CD14-positive monocyte (primary cell): ENCODE measurements at regions of chr6 and their contacts with region 1.

Region 1: GRCh38 chr6:35297601-35298481 is at the start of gene DEF6:
- DNase-seq: peak; percentile 80 to 90 (median 83)
- H3K4me3 ChIP-seq: peak within 1 kb of the TSS; percentile 68 to 94 (median 88)
- H3K4me3 Mint-ChIP-seq: peak within 1 kb of the TSS; percentile 79 to 90
- H3K27ac ChIP-seq: peak within 1 kb of the TSS; percentile 80 to 94
- H3K27ac Mint-ChIP-seq: peak within 1 kb of the TSS; percentile 91 to 97 (median 95)
- H3K4me1 ChIP-seq: peaks cover 63 to 66% of the 10 kb centered on the region in 2 donors
- H3K4me1 Mint-ChIP-seq: peaks cover 60% of the 10 kb centered on the region
- H3K27me3 ChIP-seq: no peaks in the 10 kb centered on the region
- H3K27me3 Mint-ChIP-seq: peaks cover 0 to 4% (median 0%) of the 10 kb centered on the region in 3 donors
- CTCF ChIP-seq: peak; percentile 80
- polyA plus RNA-seq, gene DEF6: 41.2 to 110 (median 59.3) TPM

Region 2: GRCh38 chr6:35327349-35328027 is 29.6 kb after region 1 on chr6:
- intact Hi-C with region 1: loop called (anchors 5 kb)
- DNase-seq: peak; percentile 44 to 74 (median 62)
- H3K4me3 ChIP-seq: no peak overlapping the region
- H3K4me3 Mint-ChIP-seq: no peak overlapping the region
- H3K27ac ChIP-seq: no peak overlapping the region
- H3K27ac Mint-ChIP-seq: peak overlapping the region in 3 of 7 donors; percentile 55 to 79 (median 63)
- H3K4me1 ChIP-seq: no peaks in the 10 kb centered on the region
- H3K4me1 Mint-ChIP-seq: peaks cover 10% of the 10 kb centered on the region
- H3K27me3 ChIP-seq: no peaks in the 10 kb centered on the region
- H3K27me3 Mint-ChIP-seq: peaks cover 0 to 1% (median 0%) of the 10 kb centered on the region in 3 donors
- CTCF ChIP-seq: peak; percentile 71

Region 3: GRCh38 chr6:35370124-35370741 is 72.4 kb after region 1 on chr6:
- intact Hi-C with region 1: loop called in 1 of 2 experiments (anchors 2 kb)
- DNase-seq: peak; percentile 96 to 100 (median 99)
- H3K4me3 ChIP-seq: peak overlapping the region in 1 of 3 experiments; percentile 60
- H3K4me3 Mint-ChIP-seq: peak overlapping the region; percentile 58 to 88
- H3K27ac ChIP-seq: peak overlapping the region; percentile 91 to 98
- H3K27ac Mint-ChIP-seq: peak overlapping the region; percentile 97 to 99 (median 99)
- H3K4me1 ChIP-seq: peaks cover 48 to 52% of the 10 kb centered on the region in 2 donors
- H3K4me1 Mint-ChIP-seq: peaks cover 56% of the 10 kb centered on the region
- H3K27me3 ChIP-seq: peaks cover 0 to 7% of the 10 kb centered on the region in 2 donors
- H3K27me3 Mint-ChIP-seq: peaks cover 8 to 15% (median 14%) of the 10 kb centered on the region in 3 donors
- CTCF ChIP-seq: no peak

Region 4: DNA sequence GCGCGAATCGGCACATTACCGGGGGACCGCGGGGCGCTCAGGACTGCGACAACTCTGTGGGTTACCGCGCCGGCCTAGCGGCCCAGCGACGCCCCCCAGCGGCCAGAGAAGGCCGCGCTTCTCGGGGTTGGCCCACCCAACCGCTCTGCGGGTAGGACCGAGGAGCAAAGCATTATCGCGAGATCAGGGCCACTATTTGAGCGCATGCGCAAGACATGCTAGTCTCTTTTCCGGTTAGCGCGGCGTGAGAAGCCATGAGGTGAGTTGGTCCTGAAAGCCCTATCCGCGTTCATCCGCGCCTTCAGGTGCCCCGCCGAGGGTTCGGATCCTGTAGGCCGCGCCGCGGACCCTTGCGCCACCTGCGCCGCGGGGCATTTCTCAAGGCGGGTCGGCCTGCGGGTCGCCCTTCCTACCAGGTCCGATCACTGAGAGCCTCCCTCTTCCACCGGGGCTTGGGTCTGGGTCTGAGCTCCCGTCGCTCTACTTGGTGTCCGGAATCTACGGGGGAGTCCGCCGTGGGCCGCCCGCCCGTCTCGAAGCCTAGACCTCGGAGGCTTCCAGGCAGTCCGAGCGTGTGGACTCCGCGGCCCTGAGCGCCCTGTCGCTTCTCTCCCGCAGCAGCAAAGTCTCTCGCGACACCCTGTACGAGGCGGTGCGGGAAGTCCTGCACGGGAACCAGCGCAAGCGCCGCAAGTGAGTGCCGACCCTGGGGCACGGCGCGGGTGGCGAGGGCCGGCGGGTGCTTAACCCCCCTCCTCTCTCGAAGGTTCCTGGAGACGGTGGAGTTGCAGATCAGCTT is 170.5 kb after region 1 on chr6 and contains the start of gene RPL10A:
- intact Hi-C with region 1: loop called (anchors 5 kb)
- DNase-seq: peak; percentile 96 to 97 (median 97)
- H3K4me3 ChIP-seq: peak within 1 kb of the TSS; percentile 80 to 99 (median 92)
- H3K4me3 Mint-ChIP-seq: peak within 1 kb of the TSS; percentile 98
- H3K27ac ChIP-seq: peak within 1 kb of the TSS; percentile 92 to 93
- H3K27ac Mint-ChIP-seq: peak within 1 kb of the TSS; percentile 96 to 99 (median 98)
- H3K4me1 ChIP-seq: peaks cover 23 to 30% of the 10 kb centered on the region in 2 donors
- H3K4me1 Mint-ChIP-seq: peaks cover 35% of the 10 kb centered on the region
- H3K27me3 ChIP-seq: no peaks in the 10 kb centered on the region
- H3K27me3 Mint-ChIP-seq: peaks cover 0 to 6% (median 0%) of the 10 kb centered on the region in 3 donors
- CTCF ChIP-seq: peak; percentile 92
- polyA plus RNA-seq, gene RPL10A: 345 to 1,242 (median 421) TPM